ENCODE measurements at regions of chr14 and their contacts with region 1.

Region 1: GRCh38 chr14:63676318-63677014 is 34.8 kb upstream of the WDR89 start:
- DNase-seq: no peak
- H3K4me3 ChIP-seq: no peak overlapping the region
- H3K27ac ChIP-seq: no peak overlapping the region
- H3K4me1 ChIP-seq: no peaks in the 10 kb centered on the region
- H3K27me3 ChIP-seq: no peaks in the 10 kb centered on the region
- CTCF ChIP-seq: no peak

Region 2: DNA sequence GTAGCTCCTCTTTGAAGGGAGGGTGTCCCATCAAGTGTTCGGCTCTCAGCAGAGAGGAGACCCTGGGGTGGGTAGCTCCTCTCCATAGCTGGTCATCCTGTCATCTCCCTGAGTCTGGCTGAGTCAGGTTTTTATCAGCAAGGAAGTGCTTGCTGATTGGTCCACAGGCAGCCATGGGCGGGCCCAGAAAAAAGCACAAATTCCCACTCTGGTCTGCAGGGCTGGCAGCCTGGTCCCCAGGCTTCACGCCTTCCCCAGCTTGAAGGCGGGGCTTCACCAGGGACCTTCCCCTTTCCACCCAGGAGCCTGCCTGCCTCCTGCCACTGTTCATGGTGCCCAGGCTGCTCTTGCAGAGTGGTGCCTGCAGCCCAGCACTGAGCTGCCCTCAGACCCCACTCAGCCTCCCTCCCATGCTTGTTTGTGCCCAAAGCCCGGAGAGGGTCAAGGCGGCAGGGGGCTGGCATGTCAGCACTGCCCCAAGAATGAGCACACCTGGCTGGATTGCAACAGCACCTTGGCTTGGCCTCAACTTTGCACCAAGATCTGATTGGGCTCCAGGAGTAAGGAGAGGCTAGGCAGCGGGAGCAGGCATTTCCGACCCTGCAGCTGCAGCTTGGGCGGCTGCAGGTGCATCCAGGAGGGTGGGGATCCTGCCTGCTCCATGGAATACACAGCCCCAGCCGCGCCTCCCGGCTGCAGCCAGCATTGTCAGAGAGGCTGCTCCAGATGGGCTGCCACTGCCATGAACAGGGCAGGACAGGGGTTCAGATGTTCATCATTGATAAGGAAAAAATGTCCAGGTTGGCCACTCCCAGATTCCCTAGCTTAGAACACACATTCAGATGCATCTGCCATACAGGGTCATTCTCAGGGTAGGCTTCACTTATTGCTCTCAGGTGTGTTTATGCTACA is 12.8 kb before region 1 on chr14:
- CTCF ChIA-PET with region 1: interaction called, 12 read pairs
- POLR2A ChIA-PET with region 1: no interaction called
- intact Hi-C with region 1: no loop called
- DNase-seq: peak; percentile 11
- H3K4me3 ChIP-seq: no peak overlapping the region
- H3K27ac ChIP-seq: no peak overlapping the region
- H3K4me1 ChIP-seq: no peaks in the 10 kb centered on the region
- H3K27me3 ChIP-seq: no peaks in the 10 kb centered on the region
- CTCF ChIP-seq: no peak

Region 3: DNA sequence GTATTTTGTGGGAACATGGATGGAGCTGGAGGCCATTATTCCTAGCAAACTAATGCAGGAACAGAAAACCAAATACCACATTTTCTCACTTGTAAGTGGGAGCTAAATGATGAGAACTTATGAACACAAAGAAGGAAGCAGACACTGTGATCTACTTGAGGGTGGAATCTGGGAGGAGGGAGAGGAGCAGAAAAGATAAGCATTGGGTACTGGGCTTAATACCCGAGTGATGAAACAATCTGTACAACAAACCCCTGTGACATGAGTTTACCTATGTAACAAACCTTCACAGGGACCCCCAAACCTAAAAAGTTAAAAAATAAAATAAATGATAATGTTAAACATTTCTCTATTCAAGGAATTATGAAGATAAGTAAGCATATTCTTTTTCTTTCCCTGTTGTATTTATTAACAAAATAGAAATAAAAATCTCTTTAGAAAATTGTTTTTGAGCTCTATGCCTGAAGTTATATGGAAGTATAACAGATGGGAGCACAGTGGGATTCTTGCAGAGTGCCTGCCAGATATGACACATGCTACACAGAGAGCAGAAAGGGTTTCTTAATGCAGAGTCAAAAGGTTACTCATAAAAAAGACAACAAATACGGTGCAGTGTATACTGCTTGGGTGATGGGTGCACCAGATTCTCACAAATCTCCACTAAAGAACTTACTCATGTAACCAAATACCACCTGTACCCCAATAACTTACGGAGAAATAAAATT is 124.3 kb after region 1 on chr14:
- CTCF ChIA-PET with region 1: no interaction called
- POLR2A ChIA-PET with region 1: no interaction called
- intact Hi-C with region 1: no loop called
- DNase-seq: no peak
- H3K4me3 ChIP-seq: no peak overlapping the region
- H3K27ac ChIP-seq: no peak overlapping the region
- H3K4me1 ChIP-seq: peaks cover 6% of the 10 kb centered on the region
- H3K27me3 ChIP-seq: no peaks in the 10 kb centered on the region
- CTCF ChIP-seq: no peak

Measured in A673 (cell line).